ENCODE measurements at regions of chr20 and their contacts with region 1.

Region 1: GRCh38 chr20:10079964-10080363 is 45.2 kb downstream of the ANKEF1 start:
- DNase-seq: no peak
- ATAC-seq: no peak
- H3K4me3 ChIP-seq: no peak overlapping the region
- H3K27ac ChIP-seq: no peak overlapping the region
- H3K4me1 ChIP-seq: no peaks in the 10 kb centered on the region
- H3K27me3 ChIP-seq: no peaks in the 10 kb centered on the region
- CTCF ChIP-seq: no peak
- POLR2A ChIP-seq: no peak

Region 2: GRCh38 chr20:9989066-9989724 is 90.8 kb before region 1 on chr20:
- intact Hi-C with region 1: loop called in 1 of 2 experiments (anchors 10 kb)
- DNase-seq: no peak
- ATAC-seq: peak in 3 of 4 donors; percentile 24 to 64 (median 59)
- H3K4me3 ChIP-seq: no peak overlapping the region
- H3K27ac ChIP-seq: no peak overlapping the region
- H3K4me1 ChIP-seq: no peaks in the 10 kb centered on the region
- H3K27me3 ChIP-seq: no peaks in the 10 kb centered on the region
- CTCF ChIP-seq: no peak
- POLR2A ChIP-seq: no peak

Measured in right lobe of liver (tissue), 6 donors.